ENCODE measurements at regions of chr17 and their contacts with region 1.

Region 1: DNA sequence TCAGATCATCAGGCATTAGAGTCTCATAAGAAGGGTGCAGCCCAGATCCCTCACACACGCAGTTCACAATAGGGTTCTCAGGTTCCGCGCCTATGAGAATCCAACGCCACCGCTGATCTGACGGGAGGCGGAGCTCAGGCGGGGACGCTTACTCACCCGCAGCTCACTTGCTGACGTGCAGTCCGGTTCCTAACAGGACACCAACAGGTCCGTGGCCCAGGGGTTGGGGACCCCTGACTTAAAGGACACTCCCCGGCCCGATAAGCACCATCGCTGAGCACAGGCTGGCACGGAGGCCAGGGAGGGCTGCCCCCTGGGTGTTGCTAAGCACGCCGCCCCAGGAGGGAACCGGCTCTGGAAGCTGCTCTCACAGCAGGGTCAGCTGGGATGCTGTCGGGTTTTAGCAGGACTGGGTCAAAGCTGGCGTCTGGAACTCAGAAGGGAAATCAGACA is 30.1 kb upstream of the BAHCC1 start:
- DNase-seq: peak; percentile 92
- ATAC-seq: peak; percentile 73
- H3K4me3 ChIP-seq: peak overlapping the region; percentile 67
- H3K27ac ChIP-seq: peak overlapping the region; percentile 90
- H3K4me1 ChIP-seq: peaks cover 37% of the 10 kb centered on the region
- H3K27me3 ChIP-seq: no peaks in the 10 kb centered on the region
- CTCF ChIP-seq: no peak

Region 2: DNA sequence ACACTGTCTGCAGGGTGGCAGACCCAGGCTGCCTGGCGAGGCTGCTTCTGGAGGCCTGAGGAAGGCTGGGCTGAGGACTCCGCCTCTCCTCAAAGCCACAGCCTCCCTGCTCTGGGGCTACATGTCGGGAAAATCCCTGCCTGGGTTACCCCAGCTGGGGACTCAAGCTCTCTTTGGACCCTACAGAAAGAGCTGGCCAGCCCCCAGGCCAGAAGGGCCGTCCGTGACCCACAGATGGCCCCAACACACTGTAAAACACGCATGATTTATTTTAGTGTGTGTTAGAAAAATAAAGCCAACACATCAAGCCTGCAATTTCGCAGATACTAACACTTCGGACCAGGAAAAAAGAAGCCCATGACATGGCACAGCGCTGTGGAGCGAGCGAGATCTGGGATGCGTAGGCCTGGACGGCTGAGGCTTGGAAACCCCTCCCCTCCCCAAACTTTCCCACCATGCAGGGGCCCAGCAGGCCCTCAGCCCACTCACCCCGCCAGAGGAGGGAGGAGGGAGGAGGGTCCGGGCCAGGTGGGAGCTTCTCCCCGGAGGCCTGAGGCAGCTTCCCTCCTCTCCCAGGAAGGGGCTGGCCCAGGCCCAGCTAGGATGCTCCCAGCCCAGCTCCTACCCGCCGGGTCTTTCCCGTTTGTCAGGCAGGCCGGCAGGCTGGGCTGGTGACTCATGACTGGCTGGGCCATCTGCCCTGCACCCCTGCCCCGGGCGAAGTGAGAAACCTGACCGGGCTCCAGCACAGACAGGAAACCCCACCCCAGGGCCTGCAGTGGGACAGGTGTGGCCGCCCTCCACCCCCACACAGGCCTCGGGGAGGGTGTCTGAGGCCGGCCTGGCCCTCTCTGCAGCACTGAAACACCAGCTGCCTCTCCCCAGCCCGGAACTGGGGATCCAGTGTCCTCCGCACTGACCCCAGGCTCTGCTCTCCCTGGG is 35.9 kb before region 1 on chr17:
- CTCF ChIA-PET with region 1: no interaction called
- POLR2A ChIA-PET with region 1: interaction called, 10 read pairs
- intact Hi-C with region 1: no loop called
- DNase-seq: peak; percentile 99
- ATAC-seq: peak; percentile 89
- H3K4me3 ChIP-seq: peak overlapping the region; percentile 47
- H3K27ac ChIP-seq: peak overlapping the region; percentile 94
- H3K4me1 ChIP-seq: peaks cover 32% of the 10 kb centered on the region
- H3K27me3 ChIP-seq: no peaks in the 10 kb centered on the region
- CTCF ChIP-seq: no peak

Region 3: DNA sequence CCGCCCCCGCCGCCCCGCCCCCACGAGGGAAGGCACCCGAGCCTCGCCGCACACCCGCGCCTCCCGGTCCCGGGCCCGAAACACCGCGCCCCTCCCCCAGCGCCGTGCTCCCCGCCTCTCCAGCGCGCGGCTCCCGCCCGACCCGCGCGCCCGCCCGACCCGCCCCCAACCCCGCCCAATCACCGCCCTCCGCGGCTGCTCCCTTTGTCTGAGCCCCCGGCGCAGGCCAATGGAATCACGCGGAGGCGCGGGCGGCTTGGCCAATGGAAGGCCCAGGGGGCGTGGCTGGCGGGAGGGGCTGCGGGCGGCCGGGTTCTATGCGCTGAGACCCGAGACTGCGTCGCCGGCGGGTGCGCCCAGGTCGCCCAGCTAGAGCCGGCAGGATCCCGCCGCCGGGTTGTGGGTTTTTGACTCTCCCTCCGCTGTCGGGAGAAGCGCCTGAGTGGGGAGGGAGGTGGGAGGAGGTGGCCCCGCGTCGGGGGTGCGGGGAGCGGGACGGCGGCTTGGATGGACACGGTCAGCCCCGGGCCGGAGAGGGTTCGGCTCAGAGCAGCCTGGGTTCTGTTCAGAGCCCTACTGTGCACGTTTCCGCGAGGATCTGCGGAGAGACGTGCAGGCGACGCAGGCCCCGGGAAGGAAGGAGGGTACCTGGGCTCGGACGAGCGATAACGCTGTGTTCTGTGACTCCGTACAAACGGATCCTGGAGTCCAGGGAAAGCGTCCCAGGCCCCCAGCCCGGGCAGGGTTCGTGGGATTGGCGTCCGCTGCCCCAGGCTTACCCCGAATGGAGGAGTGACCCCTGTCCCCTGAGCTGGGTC is 18.9 kb before region 1 on chr17:
- CTCF ChIA-PET with region 1: no interaction called
- POLR2A ChIA-PET with region 1: interaction called, 4 read pairs
- intact Hi-C with region 1: loop called (anchors 1 kb)
- DNase-seq: peak; percentile 97
- ATAC-seq: peak; percentile 61
- H3K4me3 ChIP-seq: peak overlapping the region; percentile 73
- H3K27ac ChIP-seq: no peak overlapping the region
- H3K4me1 ChIP-seq: peaks cover 33% of the 10 kb centered on the region
- H3K27me3 ChIP-seq: no peaks in the 10 kb centered on the region
- CTCF ChIP-seq: no peak

Measured in PC-3 (cell line).